Tibial artery (tissue), 4 donors: ENCODE measurements at regions of chr12 and their contacts with region 1.

Region 1: GRCh38 chr12:68497702-68498101 is 113.0 kb upstream of the RAP1B start:
- DNase-seq: no peak
- H3K4me3 ChIP-seq: no peak overlapping the region
- H3K27ac ChIP-seq: peak overlapping the region; percentile 56 to 57
- H3K4me1 ChIP-seq: peaks cover 0 to 41% (median 12%) of the 10 kb centered on the region in 4 donors
- H3K27me3 ChIP-seq: no peaks in the 10 kb centered on the region
- CTCF ChIP-seq: no peak

Region 2: GRCh38 chr12:68530965-68531364 is 33.3 kb after region 1 on chr12:
- intact Hi-C with region 1: loop called (anchors 5 kb)
- DNase-seq: peak; percentile 43 to 71
- H3K4me3 ChIP-seq: no peak overlapping the region
- H3K27ac ChIP-seq: peak overlapping the region; percentile 73 to 74
- H3K4me1 ChIP-seq: peaks cover 0 to 52% (median 26%) of the 10 kb centered on the region in 4 donors
- H3K27me3 ChIP-seq: no peaks in the 10 kb centered on the region
- CTCF ChIP-seq: no peak

Region 3: GRCh38 chr12:68727776-68728175 is 230.1 kb after region 1 on chr12:
- intact Hi-C with region 1: no loop called
- DNase-seq: no peak
- H3K4me3 ChIP-seq: no peak overlapping the region
- H3K27ac ChIP-seq: no peak overlapping the region
- H3K4me1 ChIP-seq: no peaks in the 10 kb centered on the region
- H3K27me3 ChIP-seq: no peaks in the 10 kb centered on the region
- CTCF ChIP-seq: no peak